ENCODE measurements at regions of chr17 and their contacts with region 1.

Region 1: DNA sequence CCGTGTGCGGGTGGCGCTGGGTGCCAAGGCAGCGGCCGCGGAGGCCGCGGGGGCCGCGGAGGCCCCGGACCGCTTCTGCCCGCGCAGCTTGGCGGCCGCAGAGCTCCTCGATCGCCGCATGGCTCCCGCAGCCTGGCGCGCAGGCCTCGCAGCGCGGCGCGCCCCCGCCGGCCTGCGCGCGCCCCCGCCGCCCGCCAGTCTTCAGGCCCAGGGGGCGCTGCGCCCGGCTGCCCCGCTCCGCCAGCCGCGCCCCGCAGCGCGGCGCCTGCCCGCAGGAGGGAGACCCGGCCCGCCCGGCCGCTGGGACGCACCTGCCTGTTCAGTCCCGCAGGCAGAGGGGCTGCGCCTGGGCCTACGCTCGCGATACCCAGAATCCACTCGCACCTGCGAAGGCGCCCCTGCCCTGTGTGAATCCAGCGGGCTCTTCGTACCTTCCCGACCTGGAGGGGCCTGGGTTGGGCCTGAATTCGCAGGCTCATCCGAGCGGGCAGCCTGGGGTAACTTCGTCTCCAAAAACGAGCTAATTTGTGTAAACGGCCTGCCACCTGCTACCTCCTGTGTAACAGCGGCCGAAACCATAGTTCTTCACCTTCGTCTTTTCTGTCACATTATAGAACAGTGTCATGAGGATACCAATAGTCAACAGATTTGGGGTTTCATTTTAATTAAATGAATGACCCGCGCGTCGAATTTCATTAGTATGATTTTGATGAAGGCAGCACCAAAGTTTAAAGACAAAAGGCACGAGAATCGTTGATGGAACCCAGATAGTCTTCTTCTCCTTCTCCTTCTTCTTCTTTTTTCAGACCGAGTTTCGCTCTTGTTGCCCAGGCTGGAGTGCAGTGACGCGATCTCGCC is at the start of gene CENPV:
- DNase-seq: peak; percentile 56 to 79 (median 67)
- H3K4me3 ChIP-seq: peak within 1 kb of the TSS; percentile 69
- H3K4me3 Mint-ChIP-seq: peak within 1 kb of the TSS; percentile 93 to 98 (median 94)
- H3K27ac ChIP-seq: peak within 1 kb of the TSS; percentile 31
- H3K27ac Mint-ChIP-seq: peak within 1 kb of the TSS; percentile 57 to 96 (median 80)
- H3K4me1 ChIP-seq: peaks cover 13% of the 10 kb centered on the region
- H3K4me1 Mint-ChIP-seq: peaks cover 17 to 21% (median 20%) of the 10 kb centered on the region in 3 donors
- H3K27me3 ChIP-seq: no peaks in the 10 kb centered on the region
- H3K27me3 Mint-ChIP-seq: peaks cover 0 to 2% of the 10 kb centered on the region in 2 donors
- total RNA-seq, gene CENPV: 53.4 to 56.4 TPM

Region 2: DNA sequence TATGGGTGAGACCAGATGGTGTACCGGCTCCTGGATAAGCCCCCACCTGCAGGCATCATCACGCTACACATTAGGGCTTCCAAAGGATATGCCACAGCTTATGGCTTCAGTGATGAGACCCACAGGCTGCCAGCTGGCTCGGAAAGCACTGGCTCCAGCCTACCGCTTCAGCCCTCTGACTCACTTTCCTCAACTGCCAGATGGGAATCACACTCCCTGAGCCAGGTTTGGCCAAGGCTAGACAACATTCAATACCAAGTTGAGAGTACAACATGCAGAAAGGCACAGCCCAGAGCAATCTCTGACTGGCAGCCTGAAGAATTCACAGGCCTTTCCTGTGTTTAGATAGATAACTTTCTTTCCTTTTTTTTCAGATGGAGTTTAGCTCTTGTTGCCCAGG is 10.6 kb before region 1 on chr17:
- CTCF ChIA-PET with region 1: interaction called, 15 read pairs
- POLR2A ChIA-PET with region 1: interaction called, 3 read pairs
- DNase-seq: no peak
- H3K4me3 ChIP-seq: no peak overlapping the region
- H3K4me3 Mint-ChIP-seq: no peak overlapping the region
- H3K27ac ChIP-seq: no peak overlapping the region
- H3K27ac Mint-ChIP-seq: peak overlapping the region in 2 of 8 donors; percentile 62 to 81
- H3K4me1 ChIP-seq: no peaks in the 10 kb centered on the region
- H3K4me1 Mint-ChIP-seq: no peaks in the 10 kb centered on the region
- H3K27me3 ChIP-seq: no peaks in the 10 kb centered on the region
- H3K27me3 Mint-ChIP-seq: no peaks in the 10 kb centered on the region

Measured in CD8-positive, alpha-beta memory T cell (primary cell).